Heart right ventricle (tissue), 16 donors: ENCODE measurements at regions of chr3 and their contacts with region 1.

Region 1: GRCh38 chr3:46895204-46895660 is 17.7 kb downstream of the PTH1R start:
- DNase-seq: peak; percentile 75 to 85
- ATAC-seq: peak in 7 of 8 donors; percentile 45 to 73 (median 52)
- H3K4me3 ChIP-seq: no peak overlapping the region
- H3K27ac ChIP-seq: no peak overlapping the region
- H3K4me1 ChIP-seq: peaks cover 11 to 63% (median 41%) of the 10 kb centered on the region in 9 donors
- H3K27me3 ChIP-seq: peaks cover 0 to 56% (median 11%) of the 10 kb centered on the region in 7 donors
- CTCF ChIP-seq: peak; percentile 85 to 94 (median 89)

Region 2: GRCh38 chr3:46866720-46867549 is 28.3 kb before region 1 on chr3:
- intact Hi-C with region 1: loop called in 8 of 10 experiments (anchors 1 to 2 kb)
- DNase-seq: peak; percentile 90 to 94
- ATAC-seq: peak; percentile 4 to 62 (median 32)
- H3K4me3 ChIP-seq: peak overlapping the region in 1 of 10 donors; percentile 22
- H3K27ac ChIP-seq: peak overlapping the region; percentile 65 to 98 (median 90)
- H3K4me1 ChIP-seq: peaks cover 23 to 75% (median 48%) of the 10 kb centered on the region in 9 donors
- H3K27me3 ChIP-seq: no peaks in the 10 kb centered on the region
- CTCF ChIP-seq: peak; percentile 87 to 94 (median 91)